Mammary epithelial cell (primary cell): ENCODE measurements at regions of chr1 and their contacts with region 1.

Region 1: GRCh38 chr1:155208541-155209311 is at the start of gene MTX1:
- DNase-seq: peak; percentile 74
- H3K4me3 ChIP-seq: peak within 1 kb of the TSS; percentile 86 to 100 (median 100)
- H3K27ac ChIP-seq: peak within 1 kb of the TSS; percentile 98
- H3K4me1 ChIP-seq: peaks cover 27% of the 10 kb centered on the region
- H3K27me3 ChIP-seq: no peaks in the 10 kb centered on the region
- CTCF ChIP-seq: no peak
- total RNA-seq, gene MTX1: 34.2 to 49.3 TPM

Region 2: DNA sequence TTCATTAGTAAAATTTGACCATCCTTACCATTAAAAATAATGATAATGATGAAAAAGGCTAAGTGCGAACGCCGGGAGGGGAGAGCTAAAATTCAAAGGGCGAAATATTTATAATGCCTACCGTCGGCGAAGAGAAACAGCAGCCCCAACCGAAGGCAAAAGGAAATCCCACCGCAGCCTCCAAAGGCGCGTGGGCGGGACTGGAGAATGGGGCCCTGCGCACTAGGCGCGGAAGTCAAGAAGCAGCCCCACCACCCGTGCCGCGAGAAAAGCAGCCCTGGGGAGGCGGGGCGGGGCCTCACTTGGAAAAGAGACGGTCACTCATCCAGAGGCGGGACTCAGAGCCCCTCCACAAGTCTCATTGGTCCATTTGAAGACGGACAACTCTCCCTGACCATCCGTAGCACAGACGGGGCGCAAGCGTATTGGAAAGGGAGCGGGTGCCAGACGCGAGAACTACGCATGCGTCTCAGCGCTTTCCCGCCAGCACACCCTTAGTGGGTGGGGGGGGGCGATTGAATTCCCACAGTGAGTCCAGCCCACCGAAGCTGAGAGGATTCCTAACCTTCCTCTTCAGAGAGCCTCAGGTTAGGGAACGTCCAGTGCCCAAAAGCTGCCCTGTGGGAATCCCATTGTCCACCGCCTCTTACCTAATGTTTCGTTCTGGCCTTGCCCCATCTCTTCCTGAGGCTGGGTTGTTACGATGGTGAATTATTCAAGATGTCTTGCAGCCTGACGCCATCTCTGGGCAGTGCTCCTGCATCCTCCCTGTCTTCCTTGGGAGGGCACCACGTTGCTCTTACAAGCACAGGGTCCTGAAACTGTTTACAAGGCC is 18.8 kb after region 1 on chr1:
- CTCF ChIA-PET with region 1: interaction called, 10 read pairs
- dilution Hi-C with region 1: no loop called
- in situ Hi-C with region 1: no loop called
- intact Hi-C with region 1: loop called (anchors 1 kb)
- DNase-seq: peak; percentile 98
- H3K4me3 ChIP-seq: peak overlapping the region; percentile 71 to 93 (median 76)
- H3K27ac ChIP-seq: peak overlapping the region; percentile 69
- H3K4me1 ChIP-seq: peaks cover 25% of the 10 kb centered on the region
- H3K27me3 ChIP-seq: no peaks in the 10 kb centered on the region
- CTCF ChIP-seq: no peak

Region 3: DNA sequence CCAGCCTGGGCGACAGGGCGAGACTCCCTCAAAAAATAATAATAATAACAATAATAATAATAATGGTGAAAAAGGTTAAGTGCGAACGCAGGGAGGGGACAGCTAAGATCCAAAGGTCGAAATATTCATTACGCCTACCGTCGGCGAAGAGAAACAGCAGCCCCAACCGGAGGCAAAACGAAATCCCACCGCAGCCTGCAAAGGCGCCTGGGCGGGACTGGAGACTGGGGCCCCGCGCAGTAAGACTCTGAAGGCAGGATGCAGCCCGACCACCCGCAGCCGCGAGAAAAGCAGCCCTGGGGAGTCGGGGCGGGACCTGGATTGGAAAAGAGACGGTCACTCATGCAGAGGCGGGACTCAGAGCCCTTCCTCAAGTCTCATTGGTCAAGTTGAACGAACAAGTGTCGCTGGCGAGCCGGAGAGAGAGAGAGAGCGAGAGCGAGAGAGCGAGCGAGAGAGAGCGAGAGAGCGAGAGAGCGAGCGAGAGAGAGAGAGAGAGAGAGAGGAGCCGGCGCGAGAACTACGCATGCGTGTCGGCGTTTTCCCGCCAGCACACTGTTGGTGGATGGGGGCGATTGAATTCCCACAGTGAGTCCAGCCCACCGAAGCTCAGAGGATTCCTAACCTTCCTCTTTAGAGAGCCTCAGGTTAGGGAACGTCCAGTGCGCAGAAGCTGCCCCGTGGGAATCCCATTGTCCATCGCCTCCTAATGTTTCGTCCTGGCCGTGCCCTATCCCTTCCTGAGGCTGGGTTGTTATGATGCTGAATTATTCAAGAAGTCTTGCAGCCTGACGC is 35.8 kb after region 1 on chr1:
- CTCF ChIA-PET with region 1: interaction called, 3 read pairs
- dilution Hi-C with region 1: no loop called
- in situ Hi-C with region 1: no loop called
- intact Hi-C with region 1: loop called (anchors 1 kb)
- DNase-seq: peak; percentile 99
- H3K4me3 ChIP-seq: peak overlapping the region; percentile 64 to 70 (median 68)
- H3K27ac ChIP-seq: peak overlapping the region; percentile 54
- H3K4me1 ChIP-seq: peaks cover 21% of the 10 kb centered on the region
- H3K27me3 ChIP-seq: no peaks in the 10 kb centered on the region
- CTCF ChIP-seq: peak in 1 of 2 donors; percentile 24

Region 4: GRCh38 chr1:155308493-155309422 is 100.0 kb after region 1 on chr1 and contains the start of gene FDPS:
- CTCF ChIA-PET with region 1: no interaction called
- dilution Hi-C with region 1: no loop called
- in situ Hi-C with region 1: no loop called
- intact Hi-C with region 1: loop called (anchors 5 kb)
- DNase-seq: peak; percentile 100
- H3K4me3 ChIP-seq: peak within 1 kb of the TSS; percentile 73 to 86 (median 85)
- H3K27ac ChIP-seq: peak within 1 kb of the TSS; percentile 87
- H3K4me1 ChIP-seq: peaks cover 19% of the 10 kb centered on the region
- H3K27me3 ChIP-seq: no peaks in the 10 kb centered on the region
- CTCF ChIP-seq: no peak
- total RNA-seq, gene FDPS: 180 to 795 TPM

Region 5: GRCh38 chr1:155352631-155353030 is 143.9 kb after region 1 on chr1:
- CTCF ChIA-PET with region 1: no interaction called
- dilution Hi-C with region 1: no loop called
- in situ Hi-C with region 1: no loop called
- intact Hi-C with region 1: no loop called
- DNase-seq: no peak
- H3K4me3 ChIP-seq: no peak overlapping the region
- H3K27ac ChIP-seq: no peak overlapping the region
- H3K4me1 ChIP-seq: no peaks in the 10 kb centered on the region
- H3K27me3 ChIP-seq: no peaks in the 10 kb centered on the region
- CTCF ChIP-seq: no peak

Region 6: DNA sequence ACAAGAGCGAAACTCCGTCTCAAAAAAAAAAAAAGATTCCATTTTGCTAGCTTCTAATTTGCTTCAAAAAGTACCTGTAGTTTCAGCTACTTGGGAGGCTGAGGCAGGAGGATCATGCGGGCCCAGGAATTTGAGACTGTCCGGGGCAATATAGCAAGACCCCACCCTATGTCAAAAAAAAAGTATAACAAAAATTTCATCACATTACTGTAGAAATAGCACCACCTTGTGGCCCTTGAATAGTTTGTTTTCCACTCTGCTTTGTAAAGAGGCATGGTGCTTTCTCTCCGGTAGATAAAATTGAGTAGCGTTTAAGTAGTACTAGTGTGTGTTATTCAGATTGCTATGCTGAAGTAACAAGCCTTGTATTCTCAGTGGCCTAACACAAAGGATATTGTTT is 383.0 kb after region 1 on chr1:
- CTCF ChIA-PET with region 1: no interaction called
- dilution Hi-C with region 1: no loop called
- in situ Hi-C with region 1: no loop called
- intact Hi-C with region 1: loop called (anchors 2 kb)
- DNase-seq: peak; percentile 33
- H3K4me3 ChIP-seq: no peak overlapping the region
- H3K27ac ChIP-seq: no peak overlapping the region
- H3K4me1 ChIP-seq: no peaks in the 10 kb centered on the region
- H3K27me3 ChIP-seq: no peaks in the 10 kb centered on the region
- CTCF ChIP-seq: peak; percentile 43 to 50